Activated CD4-positive, alpha-beta T cell treated with anti-CD3 and anti-CD28 coated beads, Interleukin-2, amount 10 ng/mL, durations not matched to agents 7 days and 5 days (primary cell): ENCODE measurements at regions of chr1 and their contacts with region 1.

Region 1: DNA sequence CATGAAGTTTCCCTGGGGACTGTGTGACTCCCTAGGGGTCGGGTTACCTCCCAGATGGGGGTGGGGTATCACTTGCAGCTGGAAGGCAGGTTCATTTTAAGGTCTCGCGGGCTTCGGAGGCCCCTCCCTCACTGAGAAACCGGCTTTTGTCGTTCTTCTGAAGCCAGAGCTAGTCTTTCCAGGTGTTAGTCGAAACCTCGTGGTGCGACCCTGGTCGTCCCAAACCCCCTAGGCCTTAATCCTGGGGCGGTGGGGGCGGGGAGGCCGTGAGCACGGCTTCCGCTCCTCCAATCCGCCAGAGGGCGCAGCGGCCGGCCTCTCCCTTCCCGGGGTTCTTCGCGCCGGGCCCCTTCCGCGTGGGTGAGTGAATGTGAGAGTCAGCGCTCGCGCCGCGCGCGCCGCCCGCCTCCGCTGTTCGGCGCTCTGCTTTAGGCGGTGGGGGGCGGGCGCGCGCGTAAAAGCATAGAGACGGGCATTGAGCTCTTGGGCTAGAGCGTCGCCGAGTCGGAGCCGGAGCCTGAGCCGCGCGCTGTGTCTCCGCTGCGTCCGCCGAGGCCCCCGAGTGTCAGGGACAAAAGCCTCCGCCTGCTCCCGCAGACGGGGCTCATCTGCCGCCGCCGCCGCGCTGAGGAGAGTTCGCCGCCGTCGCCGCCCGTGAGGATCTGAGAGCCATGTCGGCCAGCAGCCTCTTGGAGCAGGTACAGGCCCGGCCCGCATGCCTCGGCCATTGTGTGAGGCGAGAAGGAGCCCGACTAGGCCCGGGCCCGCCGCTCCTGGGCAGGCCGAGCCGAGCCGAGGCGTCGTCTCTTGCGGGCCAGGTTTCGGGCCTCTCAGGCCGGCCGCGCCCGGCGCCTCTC is at the start of gene YTHDF2:
- DNase-seq: peak; percentile 98
- H3K4me3 Mint-ChIP-seq: peak within 1 kb of the TSS; percentile 91
- H3K27ac Mint-ChIP-seq: peak within 1 kb of the TSS; percentile 96
- H3K4me1 Mint-ChIP-seq: peaks cover 34% of the 10 kb centered on the region
- H3K27me3 Mint-ChIP-seq: no peaks in the 10 kb centered on the region
- total RNA-seq, gene YTHDF2: 76.3 to 89.2 TPM

Region 2: DNA sequence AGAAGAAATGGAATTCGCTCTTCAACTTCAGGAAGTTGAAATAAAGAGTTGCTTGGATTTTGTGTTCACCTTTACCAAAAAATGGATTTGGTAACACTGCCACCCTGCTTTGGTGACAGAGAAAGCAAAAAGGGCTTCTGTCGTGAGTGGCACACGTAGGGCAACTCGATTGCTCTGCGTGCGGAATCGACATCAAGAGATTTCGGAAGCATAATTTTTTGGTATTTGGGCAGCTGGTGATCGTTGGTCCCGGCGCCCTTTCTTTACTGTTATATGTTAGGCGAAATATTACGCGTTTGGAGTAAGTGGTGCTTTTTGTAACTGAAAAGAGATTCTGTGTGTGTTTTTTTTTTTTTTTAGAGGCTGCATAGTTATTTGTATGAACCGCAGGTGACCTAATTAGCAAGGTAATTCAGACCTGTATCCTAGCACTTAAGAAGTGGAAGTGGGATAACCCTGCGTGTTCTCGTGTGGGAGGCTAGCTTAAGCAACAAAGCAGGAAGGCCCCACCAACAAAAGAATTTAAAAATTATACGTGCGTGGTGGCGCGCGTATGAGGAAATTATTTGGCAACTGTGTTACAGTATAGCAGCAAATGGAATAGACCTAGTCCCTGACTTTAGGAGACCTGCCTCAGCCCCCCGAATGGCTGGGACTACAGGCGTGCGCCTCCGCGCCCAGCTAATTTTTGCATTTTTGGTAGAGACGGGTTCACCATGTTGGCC is 88.0 kb before region 1 on chr1 and contains the start of gene RNU11:
- CTCF ChIA-PET with region 1: interaction called, 24 read pairs
- POLR2A ChIA-PET with region 1: interaction called, 12 read pairs
- DNase-seq: peak; percentile 92
- H3K4me3 Mint-ChIP-seq: peak within 1 kb of the TSS; percentile 77
- H3K27ac Mint-ChIP-seq: peak within 1 kb of the TSS; percentile 97
- H3K4me1 Mint-ChIP-seq: peaks cover 34% of the 10 kb centered on the region
- H3K27me3 Mint-ChIP-seq: no peaks in the 10 kb centered on the region
- total RNA-seq, gene RNU11: not detected

Region 3: DNA sequence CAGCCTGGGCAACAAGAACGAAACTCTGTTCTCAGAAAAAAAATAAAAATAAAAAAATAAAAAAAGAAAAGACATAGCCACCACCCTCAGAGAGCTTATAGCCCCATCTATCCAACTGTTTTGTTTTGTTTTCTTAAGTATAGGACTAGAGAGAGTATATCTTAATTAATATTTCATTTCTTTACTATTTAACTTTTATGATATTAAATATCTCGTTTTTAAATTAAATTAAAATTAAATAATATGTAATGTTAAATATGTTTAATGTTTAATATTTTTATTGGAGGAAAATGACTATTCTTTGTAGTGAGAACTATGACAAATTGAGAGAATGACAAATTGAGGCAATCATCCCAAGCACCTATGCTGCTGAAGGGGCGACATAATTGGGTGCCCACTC is 33.0 kb before region 1 on chr1:
- CTCF ChIA-PET with region 1: interaction called, 12 read pairs
- POLR2A ChIA-PET with region 1: no interaction called
- DNase-seq: no peak
- H3K4me3 Mint-ChIP-seq: no peak overlapping the region
- H3K27ac Mint-ChIP-seq: no peak overlapping the region
- H3K4me1 Mint-ChIP-seq: peaks cover 16% of the 10 kb centered on the region
- H3K27me3 Mint-ChIP-seq: no peaks in the 10 kb centered on the region

Region 4: DNA sequence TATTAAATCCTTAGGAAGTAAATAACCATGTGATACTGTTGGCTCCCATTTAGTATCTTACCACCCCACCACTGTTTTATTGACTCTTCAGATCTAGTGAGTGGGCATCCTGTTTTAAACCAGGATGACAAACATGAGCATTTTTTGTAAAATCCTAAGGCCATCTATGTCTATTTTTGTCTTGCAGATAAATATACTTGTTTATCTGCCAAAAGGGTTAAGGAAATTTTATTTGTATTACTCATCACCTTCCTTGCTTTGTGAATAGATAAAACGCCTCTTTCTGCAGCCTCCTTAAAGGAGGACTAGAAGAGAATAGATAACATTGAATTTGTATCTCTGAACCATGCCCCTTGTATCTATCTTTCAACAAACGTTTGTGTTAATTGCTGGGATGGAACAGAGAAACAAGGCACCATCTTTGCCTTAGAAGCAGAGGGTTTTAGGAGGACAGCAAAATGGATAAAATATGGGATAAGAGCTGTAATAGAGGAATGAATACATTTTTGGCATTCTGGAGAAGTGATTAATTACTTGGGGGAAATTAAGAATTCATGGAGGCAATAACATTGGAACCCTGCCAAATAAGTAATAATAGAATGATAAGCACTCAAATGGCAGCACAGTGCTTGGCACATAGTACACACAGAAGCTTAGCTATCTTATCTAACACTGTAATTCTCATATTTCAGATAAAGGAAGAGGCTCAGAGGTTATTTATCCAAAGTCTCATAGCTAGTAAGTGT is 14.8 kb after region 1 on chr1:
- CTCF ChIA-PET with region 1: interaction called, 24 read pairs
- POLR2A ChIA-PET with region 1: no interaction called
- DNase-seq: no peak
- H3K4me3 Mint-ChIP-seq: no peak overlapping the region
- H3K27ac Mint-ChIP-seq: no peak overlapping the region
- H3K4me1 Mint-ChIP-seq: peaks cover 42% of the 10 kb centered on the region
- H3K27me3 Mint-ChIP-seq: no peaks in the 10 kb centered on the region